CD4-positive, alpha-beta memory T cell (primary cell): ENCODE measurements at regions of chr4 and their contacts with region 1.

Region 1: GRCh38 chr4:36244257-36245079 is at the start of gene ARAP2:
- DNase-seq: peak; percentile 75 to 80 (median 79)
- H3K4me3 ChIP-seq: peak within 1 kb of the TSS; percentile 73 to 93
- H3K4me3 Mint-ChIP-seq: peak within 1 kb of the TSS; percentile 92 to 99 (median 96)
- H3K27ac ChIP-seq: peak within 1 kb of the TSS; percentile 89
- H3K27ac Mint-ChIP-seq: peak within 1 kb of the TSS; percentile 94 to 98 (median 96)
- H3K4me1 ChIP-seq: peaks cover 42% of the 10 kb centered on the region
- H3K4me1 Mint-ChIP-seq: peaks cover 25 to 50% (median 40%) of the 10 kb centered on the region in 4 donors
- H3K27me3 ChIP-seq: no peaks in the 10 kb centered on the region
- H3K27me3 Mint-ChIP-seq: no peaks in the 10 kb centered on the region
- total RNA-seq, gene ARAP2: 89.6 to 97.4 TPM

Region 2: GRCh38 chr4:36189511-36190226 is 54.8 kb before region 1 on chr4:
- CTCF ChIA-PET with region 1: interaction called, 4 read pairs
- POLR2A ChIA-PET with region 1: interaction called, 13 read pairs
- intact Hi-C with region 1: no loop called
- DNase-seq: peak; percentile 14 to 39 (median 19)
- H3K4me3 ChIP-seq: no peak overlapping the region
- H3K4me3 Mint-ChIP-seq: peak overlapping the region in 7 of 8 donors; percentile 32 to 70 (median 51)
- H3K27ac ChIP-seq: no peak overlapping the region
- H3K27ac Mint-ChIP-seq: peak overlapping the region; percentile 24 to 76 (median 53)
- H3K4me1 ChIP-seq: peaks cover 42% of the 10 kb centered on the region
- H3K4me1 Mint-ChIP-seq: peaks cover 23 to 40% (median 32%) of the 10 kb centered on the region in 4 donors
- H3K27me3 ChIP-seq: no peaks in the 10 kb centered on the region
- H3K27me3 Mint-ChIP-seq: no peaks in the 10 kb centered on the region

Region 3: DNA sequence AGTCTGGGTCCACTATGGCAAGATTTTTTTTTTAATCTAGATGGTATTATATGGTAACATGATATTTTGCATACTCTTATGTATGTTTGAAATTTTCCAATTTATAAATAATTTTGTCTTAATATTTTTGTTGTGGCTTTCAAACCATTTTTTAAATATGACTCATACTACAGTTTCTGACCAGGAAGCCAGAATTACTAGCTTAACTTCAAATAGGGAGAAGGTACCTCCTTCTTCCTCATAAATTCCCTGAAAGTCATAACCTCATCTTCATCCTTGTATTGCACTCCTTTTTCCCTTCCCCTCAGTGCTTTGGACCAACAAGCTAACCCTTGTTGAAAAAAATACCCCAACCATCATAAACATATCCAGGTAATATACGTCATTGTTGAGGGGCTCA is 21.8 kb before region 1 on chr4:
- CTCF ChIA-PET with region 1: interaction called, 6 read pairs
- POLR2A ChIA-PET with region 1: interaction called, 52 read pairs
- intact Hi-C with region 1: no loop called
- DNase-seq: no peak
- H3K4me3 ChIP-seq: no peak overlapping the region
- H3K4me3 Mint-ChIP-seq: peak overlapping the region in 3 of 8 donors; percentile 11 to 28 (median 11)
- H3K27ac ChIP-seq: no peak overlapping the region
- H3K27ac Mint-ChIP-seq: peak overlapping the region in 1 of 7 donors; percentile 42
- H3K4me1 ChIP-seq: peaks cover 79% of the 10 kb centered on the region
- H3K4me1 Mint-ChIP-seq: peaks cover 61 to 88% (median 74%) of the 10 kb centered on the region in 4 donors
- H3K27me3 ChIP-seq: no peaks in the 10 kb centered on the region
- H3K27me3 Mint-ChIP-seq: no peaks in the 10 kb centered on the region

Region 4: DNA sequence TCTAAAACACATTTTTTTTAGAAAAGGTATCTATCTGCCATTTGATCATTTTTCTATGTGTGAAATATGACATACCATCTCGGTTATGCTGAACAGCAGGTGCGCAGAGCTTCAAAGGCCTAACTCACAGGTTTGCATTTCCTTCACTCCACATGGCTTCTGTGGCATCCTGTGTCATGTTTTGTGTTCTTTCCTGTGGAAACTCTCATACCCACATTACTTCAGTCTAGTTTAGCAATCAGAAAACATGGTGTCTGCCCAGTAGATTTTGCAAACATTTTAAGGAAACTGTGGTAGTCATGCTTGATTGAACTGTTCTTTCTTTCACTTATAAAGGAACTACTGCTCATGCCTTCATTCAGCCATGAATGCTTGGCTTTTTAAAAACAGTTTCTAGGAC is 11.1 kb after region 1 on chr4:
- CTCF ChIA-PET with region 1: interaction called, 69 read pairs
- POLR2A ChIA-PET with region 1: interaction called, 137 read pairs
- intact Hi-C with region 1: loop called (anchors 1 kb)
- DNase-seq: peak; percentile 83 to 91 (median 89)
- H3K4me3 ChIP-seq: no peak overlapping the region
- H3K4me3 Mint-ChIP-seq: peak overlapping the region; percentile 71 to 88 (median 80)
- H3K27ac ChIP-seq: peak overlapping the region; percentile 27
- H3K27ac Mint-ChIP-seq: peak overlapping the region; percentile 83 to 96 (median 92)
- H3K4me1 ChIP-seq: peaks cover 48% of the 10 kb centered on the region
- H3K4me1 Mint-ChIP-seq: peaks cover 35 to 55% (median 40%) of the 10 kb centered on the region in 4 donors
- H3K27me3 ChIP-seq: no peaks in the 10 kb centered on the region
- H3K27me3 Mint-ChIP-seq: no peaks in the 10 kb centered on the region

Region 5: DNA sequence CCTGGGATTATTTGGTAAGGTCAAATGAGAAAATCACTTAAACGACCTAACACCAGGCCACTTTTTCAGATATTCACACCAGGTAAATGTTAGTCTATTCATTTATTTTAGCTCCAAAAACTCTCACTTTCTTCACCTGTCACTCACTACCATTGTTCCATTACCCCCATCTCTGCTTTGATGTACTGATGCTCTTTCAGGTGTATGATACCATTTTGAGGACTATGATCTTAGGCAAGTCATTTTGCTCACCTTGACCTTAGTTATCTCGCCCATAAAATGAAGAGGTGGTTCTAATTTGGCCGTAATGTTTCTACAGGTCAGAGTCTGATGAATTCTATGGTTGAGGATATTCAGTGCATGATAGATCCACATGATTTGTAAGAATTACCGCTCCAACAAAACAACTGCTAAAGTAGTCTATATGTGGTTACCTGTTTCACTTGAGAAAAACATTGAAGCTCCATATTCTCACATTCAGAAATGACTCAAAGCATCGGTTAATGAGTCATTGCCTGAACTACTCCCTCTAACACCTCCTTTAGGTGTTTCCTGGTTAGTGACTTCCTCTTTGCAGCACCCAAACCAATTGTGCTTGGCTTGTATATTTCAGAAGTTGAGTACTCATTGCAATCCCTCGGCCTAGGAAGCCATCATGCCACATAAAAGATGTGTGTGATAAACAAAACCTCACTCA is 41.5 kb after region 1 on chr4:
- CTCF ChIA-PET with region 1: interaction called, 30 read pairs
- POLR2A ChIA-PET with region 1: interaction called, 130 read pairs
- intact Hi-C with region 1: loop called (anchors 1 kb)
- DNase-seq: peak; percentile 77 to 85 (median 81)
- H3K4me3 ChIP-seq: peak overlapping the region in 1 of 2 donors; percentile 8
- H3K4me3 Mint-ChIP-seq: peak overlapping the region; percentile 49 to 87 (median 74)
- H3K27ac ChIP-seq: peak overlapping the region; percentile 74
- H3K27ac Mint-ChIP-seq: peak overlapping the region; percentile 85 to 98 (median 92)
- H3K4me1 ChIP-seq: peaks cover 37% of the 10 kb centered on the region
- H3K4me1 Mint-ChIP-seq: peaks cover 24 to 48% (median 34%) of the 10 kb centered on the region in 4 donors
- H3K27me3 ChIP-seq: no peaks in the 10 kb centered on the region
- H3K27me3 Mint-ChIP-seq: no peaks in the 10 kb centered on the region

Region 6: GRCh38 chr4:36385951-36386571 is 141.6 kb after region 1 on chr4:
- CTCF ChIA-PET with region 1: no interaction called
- POLR2A ChIA-PET with region 1: interaction called, 15 read pairs
- intact Hi-C with region 1: loop called (anchors 2 kb)
- DNase-seq: peak; percentile 75 to 83 (median 79)
- H3K4me3 ChIP-seq: no peak overlapping the region
- H3K4me3 Mint-ChIP-seq: peak overlapping the region; percentile 18 to 85 (median 64)
- H3K27ac ChIP-seq: peak overlapping the region; percentile 39
- H3K27ac Mint-ChIP-seq: peak overlapping the region; percentile 78 to 99 (median 96)
- H3K4me1 ChIP-seq: peaks cover 23% of the 10 kb centered on the region
- H3K4me1 Mint-ChIP-seq: peaks cover 20 to 32% (median 23%) of the 10 kb centered on the region in 4 donors
- H3K27me3 ChIP-seq: no peaks in the 10 kb centered on the region
- H3K27me3 Mint-ChIP-seq: no peaks in the 10 kb centered on the region

Region 7: GRCh38 chr4:36399762-36400353 is 155.4 kb after region 1 on chr4:
- CTCF ChIA-PET with region 1: interaction called, 15 read pairs
- POLR2A ChIA-PET with region 1: interaction called, 18 read pairs
- intact Hi-C with region 1: no loop called
- DNase-seq: peak; percentile 44 to 60 (median 52)
- H3K4me3 ChIP-seq: no peak overlapping the region
- H3K4me3 Mint-ChIP-seq: no peak overlapping the region
- H3K27ac ChIP-seq: no peak overlapping the region
- H3K27ac Mint-ChIP-seq: no peak overlapping the region
- H3K4me1 ChIP-seq: peaks cover 5% of the 10 kb centered on the region
- H3K4me1 Mint-ChIP-seq: peaks cover 4 to 8% (median 5%) of the 10 kb centered on the region in 4 donors
- H3K27me3 ChIP-seq: no peaks in the 10 kb centered on the region
- H3K27me3 Mint-ChIP-seq: no peaks in the 10 kb centered on the region

Region 8: GRCh38 chr4:36568575-36568974 is 324.1 kb after region 1 on chr4:
- CTCF ChIA-PET with region 1: no interaction called
- POLR2A ChIA-PET with region 1: no interaction called
- intact Hi-C with region 1: no loop called
- DNase-seq: no peak
- H3K4me3 ChIP-seq: no peak overlapping the region
- H3K4me3 Mint-ChIP-seq: no peak overlapping the region
- H3K27ac ChIP-seq: no peak overlapping the region
- H3K27ac Mint-ChIP-seq: no peak overlapping the region
- H3K4me1 ChIP-seq: no peaks in the 10 kb centered on the region
- H3K4me1 Mint-ChIP-seq: no peaks in the 10 kb centered on the region
- H3K27me3 ChIP-seq: no peaks in the 10 kb centered on the region
- H3K27me3 Mint-ChIP-seq: peaks cover 8 to 10% of the 10 kb centered on the region in 2 donors

Region 9: DNA sequence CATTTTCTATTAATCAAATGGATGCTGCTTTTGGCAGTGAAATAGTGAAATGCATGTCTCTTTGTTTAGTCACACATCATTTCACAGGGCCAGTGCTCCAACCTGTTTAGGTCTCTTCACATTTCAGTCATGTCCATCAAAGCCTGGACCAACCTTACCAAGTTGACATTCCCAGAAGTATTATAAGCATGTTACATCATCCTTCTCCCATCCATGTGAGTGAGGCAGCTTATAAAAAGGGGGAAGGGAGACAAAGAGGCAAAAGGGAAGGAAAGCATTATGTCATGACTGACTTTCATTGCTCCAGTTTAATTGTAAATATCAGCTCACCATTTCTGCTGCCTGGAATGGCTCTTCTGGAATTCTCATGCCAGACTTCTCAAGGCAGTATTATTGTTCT is 1094.5 kb after region 1 on chr4:
- CTCF ChIA-PET with region 1: no interaction called
- POLR2A ChIA-PET with region 1: no interaction called
- intact Hi-C with region 1: no loop called
- DNase-seq: no peak
- H3K4me3 ChIP-seq: no peak overlapping the region
- H3K4me3 Mint-ChIP-seq: peak overlapping the region in 1 of 8 donors; percentile 27
- H3K27ac ChIP-seq: no peak overlapping the region
- H3K27ac Mint-ChIP-seq: no peak overlapping the region
- H3K4me1 ChIP-seq: no peaks in the 10 kb centered on the region
- H3K4me1 Mint-ChIP-seq: no peaks in the 10 kb centered on the region
- H3K27me3 ChIP-seq: no peaks in the 10 kb centered on the region
- H3K27me3 Mint-ChIP-seq: peaks cover 0 to 5% of the 10 kb centered on the region in 2 donors